T-cell (primary cell): ENCODE measurements at regions of chr3 and their contacts with region 1.

Region 1: DNA sequence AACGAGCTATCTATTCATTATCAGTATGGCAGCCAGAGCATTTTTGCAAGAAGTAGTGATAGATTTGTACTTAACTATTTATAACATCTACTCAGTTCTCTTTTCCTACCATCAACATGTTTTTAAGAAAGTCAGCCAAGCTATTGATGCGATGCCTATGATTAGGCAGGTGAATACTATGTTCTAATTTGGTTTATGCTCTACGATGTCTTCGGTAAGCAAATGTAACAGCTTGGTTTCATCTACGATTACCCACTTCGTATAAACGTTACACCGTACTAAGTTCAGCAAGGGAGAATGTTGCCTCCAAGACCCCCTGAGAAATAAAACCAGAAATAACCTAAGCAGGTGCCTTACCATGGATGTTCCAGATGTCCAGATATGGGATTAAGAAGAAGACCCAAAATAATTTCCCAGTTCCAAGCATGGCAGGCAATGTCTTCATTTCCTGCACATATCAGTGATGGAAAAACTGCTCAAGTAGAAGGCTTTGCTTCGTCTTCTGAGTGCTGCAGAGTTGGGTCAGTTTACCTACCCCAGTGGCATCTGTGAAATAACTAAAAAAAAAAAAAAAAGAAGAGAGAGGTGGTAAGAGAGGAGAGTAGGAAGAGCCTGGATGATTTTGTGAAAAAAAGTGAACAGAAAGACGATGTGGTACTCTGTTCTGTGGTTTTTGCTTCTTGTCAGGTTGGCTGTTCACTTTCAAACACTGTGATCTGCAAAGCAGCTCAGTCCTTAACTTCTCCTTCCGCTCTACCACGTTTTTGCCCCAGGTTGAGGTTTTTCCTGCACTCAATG is at the start of gene BTLA:
- DNase-seq: peak in 19 of 35 experiments; percentile 4 to 64 (median 15)
- ATAC-seq: peak; percentile 70 to 84 (median 81)
- H3K4me3 ChIP-seq: peak within 1 kb of the TSS; percentile 44 to 85
- H3K4me3 Mint-ChIP-seq: peak within 1 kb of the TSS; percentile 92 to 98 (median 95)
- H3K27ac ChIP-seq: peak within 1 kb of the TSS; percentile 35
- H3K27ac Mint-ChIP-seq: peak within 1 kb of the TSS; percentile 94 to 98
- H3K4me1 ChIP-seq: peaks cover 9 to 29% of the 10 kb centered on the region in 2 experiments
- H3K4me1 Mint-ChIP-seq: peaks cover 55 to 62% (median 56%) of the 10 kb centered on the region in 3 donors
- H3K27me3 ChIP-seq: no peaks in the 10 kb centered on the region
- H3K27me3 Mint-ChIP-seq: no peaks in the 10 kb centered on the region
- total RNA-seq, gene BTLA: 11.5 to 16.9 (median 15.2) TPM

Region 2: DNA sequence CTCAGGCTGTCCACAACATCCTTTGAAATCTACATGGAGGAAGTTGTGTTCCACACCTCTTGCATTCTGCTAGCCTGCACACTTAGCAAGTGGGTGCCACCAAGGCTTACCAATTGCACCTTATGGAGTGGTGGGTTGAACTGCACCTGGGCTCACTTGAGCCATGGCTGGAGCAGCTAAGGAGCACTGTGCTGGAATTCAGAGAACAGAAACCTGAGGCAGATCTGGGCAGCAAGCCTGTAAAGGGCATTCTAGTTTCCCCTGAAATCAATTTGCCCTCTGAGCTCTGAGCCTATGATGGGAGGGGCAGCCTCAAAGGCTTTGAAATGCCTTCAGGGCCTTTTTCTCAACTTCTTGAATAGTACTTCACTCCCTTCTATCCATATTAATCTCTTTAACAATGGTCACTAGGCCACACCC is 17.8 kb before region 1 on chr3:
- CTCF ChIA-PET with region 1: interaction called in 1 of 2 experiments, 3 read pairs
- POLR2A ChIA-PET with region 1: interaction called, 10 to 18 read pairs
- DNase-seq: no peak
- ATAC-seq: no peak
- H3K4me3 ChIP-seq: no peak overlapping the region
- H3K4me3 Mint-ChIP-seq: no peak overlapping the region
- H3K27ac ChIP-seq: no peak overlapping the region
- H3K27ac Mint-ChIP-seq: peak overlapping the region; percentile 46
- H3K4me1 ChIP-seq: peaks cover 11 to 12% of the 10 kb centered on the region in 2 experiments
- H3K4me1 Mint-ChIP-seq: peaks cover 55 to 64% (median 59%) of the 10 kb centered on the region in 3 donors
- H3K27me3 ChIP-seq: no peaks in the 10 kb centered on the region
- H3K27me3 Mint-ChIP-seq: no peaks in the 10 kb centered on the region